CD8-positive, alpha-beta T cell (primary cell): ENCODE measurements at regions of chr20 and their contacts with region 1.

Region 1: GRCh38 chr20:24917797-24918578 is 31.1 kb upstream of the CST7 start:
- DNase-seq: peak; percentile 16 to 76 (median 49)
- ATAC-seq: peak; percentile 44
- H3K4me3 ChIP-seq: no peak overlapping the region
- H3K4me3 Mint-ChIP-seq: peak overlapping the region; percentile 5
- H3K27ac ChIP-seq: no peak overlapping the region
- H3K27ac Mint-ChIP-seq: no peak overlapping the region
- H3K4me1 ChIP-seq: no peaks in the 10 kb centered on the region
- H3K4me1 Mint-ChIP-seq: peaks cover 4% of the 10 kb centered on the region
- H3K27me3 ChIP-seq: no peaks in the 10 kb centered on the region
- H3K27me3 Mint-ChIP-seq: peaks cover 9% of the 10 kb centered on the region
- CTCF ChIP-seq: peak; percentile 75

Region 2: GRCh38 chr20:23889775-23890211 is 1028.2 kb before region 1 on chr20:
- CTCF ChIA-PET with region 1: no interaction called
- POLR2A ChIA-PET with region 1: no interaction called
- intact Hi-C with region 1: loop called (anchors 2 to 5 kb)
- DNase-seq: peak; percentile 37 to 82 (median 63)
- ATAC-seq: peak; percentile 88
- H3K4me3 ChIP-seq: no peak overlapping the region
- H3K4me3 Mint-ChIP-seq: no peak overlapping the region
- H3K27ac ChIP-seq: no peak overlapping the region
- H3K27ac Mint-ChIP-seq: no peak overlapping the region
- H3K4me1 ChIP-seq: peaks cover 9% of the 10 kb centered on the region
- H3K4me1 Mint-ChIP-seq: no peaks in the 10 kb centered on the region
- H3K27me3 ChIP-seq: no peaks in the 10 kb centered on the region
- H3K27me3 Mint-ChIP-seq: peaks cover 4% of the 10 kb centered on the region
- CTCF ChIP-seq: peak; percentile 61

Region 3: GRCh38 chr20:24100385-24101011 is 817.5 kb before region 1 on chr20:
- CTCF ChIA-PET with region 1: no interaction called
- POLR2A ChIA-PET with region 1: no interaction called
- intact Hi-C with region 1: loop called in 1 of 2 experiments (anchors 10 kb)
- DNase-seq: peak; percentile 16 to 78 (median 59)
- ATAC-seq: peak; percentile 93
- H3K4me3 ChIP-seq: no peak overlapping the region
- H3K4me3 Mint-ChIP-seq: no peak overlapping the region
- H3K27ac ChIP-seq: no peak overlapping the region
- H3K27ac Mint-ChIP-seq: no peak overlapping the region
- H3K4me1 ChIP-seq: peaks cover 4% of the 10 kb centered on the region
- H3K4me1 Mint-ChIP-seq: peaks cover 4% of the 10 kb centered on the region
- H3K27me3 ChIP-seq: no peaks in the 10 kb centered on the region
- H3K27me3 Mint-ChIP-seq: peaks cover 2% of the 10 kb centered on the region
- CTCF ChIP-seq: peak; percentile 75

Region 4: GRCh38 chr20:24134284-24134683 is 783.7 kb before region 1 on chr20:
- CTCF ChIA-PET with region 1: no interaction called
- POLR2A ChIA-PET with region 1: no interaction called
- intact Hi-C with region 1: loop called in 1 of 2 experiments (anchors 10 kb)
- DNase-seq: no peak
- ATAC-seq: no peak
- H3K4me3 ChIP-seq: no peak overlapping the region
- H3K4me3 Mint-ChIP-seq: no peak overlapping the region
- H3K27ac ChIP-seq: no peak overlapping the region
- H3K27ac Mint-ChIP-seq: no peak overlapping the region
- H3K4me1 ChIP-seq: no peaks in the 10 kb centered on the region
- H3K4me1 Mint-ChIP-seq: peaks cover 3% of the 10 kb centered on the region
- H3K27me3 ChIP-seq: no peaks in the 10 kb centered on the region
- H3K27me3 Mint-ChIP-seq: no peaks in the 10 kb centered on the region
- CTCF ChIP-seq: no peak

Region 5: DNA sequence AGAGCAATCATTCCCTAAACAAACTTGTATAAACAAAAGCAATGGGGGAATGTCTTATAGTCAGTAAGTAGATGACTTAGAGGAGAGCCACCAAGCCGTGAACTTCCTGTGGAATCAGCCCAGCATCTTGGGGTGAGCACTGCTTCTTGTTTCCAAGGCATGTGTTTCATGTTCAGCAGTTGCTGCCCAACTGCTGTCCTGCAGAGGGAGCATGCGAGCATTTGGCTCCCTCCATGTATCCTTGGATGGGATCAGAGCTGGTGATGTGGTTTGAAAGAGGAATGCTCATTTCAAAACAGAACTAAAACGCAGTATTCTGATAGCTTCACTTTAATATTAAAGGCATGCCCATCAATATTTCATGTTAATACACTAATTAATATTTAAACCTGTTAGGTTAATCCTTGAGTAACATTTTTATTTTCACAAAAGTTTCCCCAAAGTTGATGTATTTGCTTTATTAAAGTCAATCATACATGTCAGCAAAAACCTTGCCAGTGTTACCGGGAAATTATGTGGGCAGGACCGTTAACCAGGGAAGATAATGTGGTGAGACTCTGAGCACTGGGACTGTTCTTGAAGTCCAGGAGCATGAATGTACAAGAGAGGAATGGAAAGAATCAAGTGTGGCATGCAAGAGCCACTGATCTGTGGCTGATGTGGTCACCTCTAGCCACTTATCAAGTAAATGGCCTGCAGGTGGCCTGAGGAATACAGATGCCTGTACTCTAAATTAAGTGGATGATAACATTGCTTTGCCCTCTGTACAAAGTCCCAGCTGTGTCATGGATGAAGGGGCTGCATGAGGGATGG is 757.2 kb before region 1 on chr20:
- CTCF ChIA-PET with region 1: no interaction called
- POLR2A ChIA-PET with region 1: no interaction called
- intact Hi-C with region 1: loop called (anchors 10 kb)
- DNase-seq: peak in 2 of 9 experiments; percentile 20 to 46
- ATAC-seq: no peak
- H3K4me3 ChIP-seq: no peak overlapping the region
- H3K4me3 Mint-ChIP-seq: no peak overlapping the region
- H3K27ac ChIP-seq: no peak overlapping the region
- H3K27ac Mint-ChIP-seq: no peak overlapping the region
- H3K4me1 ChIP-seq: no peaks in the 10 kb centered on the region
- H3K4me1 Mint-ChIP-seq: peaks cover 2% of the 10 kb centered on the region
- H3K27me3 ChIP-seq: no peaks in the 10 kb centered on the region
- H3K27me3 Mint-ChIP-seq: peaks cover 2% of the 10 kb centered on the region
- CTCF ChIP-seq: peak; percentile 24

Region 6: GRCh38 chr20:24208614-24209013 is 709.4 kb before region 1 on chr20:
- CTCF ChIA-PET with region 1: no interaction called
- POLR2A ChIA-PET with region 1: no interaction called
- intact Hi-C with region 1: loop called in 1 of 2 experiments (anchors 10 kb)
- DNase-seq: no peak
- ATAC-seq: no peak
- H3K4me3 ChIP-seq: no peak overlapping the region
- H3K4me3 Mint-ChIP-seq: no peak overlapping the region
- H3K27ac ChIP-seq: no peak overlapping the region
- H3K27ac Mint-ChIP-seq: no peak overlapping the region
- H3K4me1 ChIP-seq: no peaks in the 10 kb centered on the region
- H3K4me1 Mint-ChIP-seq: peaks cover 4% of the 10 kb centered on the region
- H3K27me3 ChIP-seq: peaks cover 0 to 3% of the 10 kb centered on the region in 2 experiments
- H3K27me3 Mint-ChIP-seq: peaks cover 20% of the 10 kb centered on the region
- CTCF ChIP-seq: no peak

Region 7: GRCh38 chr20:24684956-24685691 is 232.9 kb before region 1 on chr20:
- CTCF ChIA-PET with region 1: no interaction called
- POLR2A ChIA-PET with region 1: no interaction called
- intact Hi-C with region 1: loop called in 1 of 2 experiments (anchors 10 kb)
- DNase-seq: no peak
- ATAC-seq: no peak
- H3K4me3 ChIP-seq: no peak overlapping the region
- H3K4me3 Mint-ChIP-seq: no peak overlapping the region
- H3K27ac ChIP-seq: no peak overlapping the region
- H3K27ac Mint-ChIP-seq: no peak overlapping the region
- H3K4me1 ChIP-seq: no peaks in the 10 kb centered on the region
- H3K4me1 Mint-ChIP-seq: no peaks in the 10 kb centered on the region
- H3K27me3 ChIP-seq: no peaks in the 10 kb centered on the region
- H3K27me3 Mint-ChIP-seq: no peaks in the 10 kb centered on the region
- CTCF ChIP-seq: no peak

Region 8: DNA sequence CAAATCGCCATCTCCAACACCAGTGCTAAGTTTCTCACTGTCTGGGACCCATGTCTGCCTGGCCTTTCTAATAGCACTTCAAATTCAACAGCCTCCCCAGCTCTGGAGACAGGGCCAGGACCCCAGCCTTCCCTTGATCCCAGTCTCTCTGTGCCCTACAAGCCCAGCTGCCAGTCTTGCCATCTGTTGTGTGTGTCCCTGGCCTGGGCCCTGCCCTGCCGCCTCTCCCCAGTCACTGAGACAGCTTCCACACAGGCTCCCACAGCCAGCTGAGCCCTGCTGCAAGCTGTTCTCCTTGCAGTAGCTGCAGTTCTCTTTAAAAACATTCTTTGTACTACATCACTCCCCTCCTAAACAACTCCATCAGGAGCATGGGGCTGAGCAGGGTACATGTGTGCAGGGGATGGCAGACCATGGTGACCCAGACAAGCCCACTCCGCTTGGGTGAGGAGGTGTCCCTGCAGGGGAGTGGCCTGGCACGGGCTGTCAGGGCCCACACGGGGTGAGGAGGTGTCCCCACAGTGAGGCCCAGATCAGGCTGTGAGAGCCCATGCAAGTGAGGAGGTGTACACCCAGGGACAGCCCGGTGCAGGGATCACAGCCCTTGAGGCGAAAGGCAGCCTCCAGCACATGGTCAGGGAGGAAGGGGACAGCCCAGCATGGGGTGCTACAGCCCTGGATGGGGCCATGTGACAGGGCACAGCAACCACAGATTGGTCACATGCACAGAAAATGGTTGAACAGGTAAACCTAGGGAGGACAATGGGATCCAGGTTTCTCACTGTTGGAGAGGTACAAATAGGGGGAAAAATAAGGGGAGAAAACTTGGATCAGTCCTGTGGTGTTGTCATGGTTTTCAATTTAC is 47.3 kb after region 1 on chr20:
- CTCF ChIA-PET with region 1: no interaction called
- POLR2A ChIA-PET with region 1: no interaction called
- intact Hi-C with region 1: no loop called
- DNase-seq: no peak
- ATAC-seq: no peak
- H3K4me3 ChIP-seq: no peak overlapping the region
- H3K4me3 Mint-ChIP-seq: no peak overlapping the region
- H3K27ac ChIP-seq: peak overlapping the region in 1 of 2 experiments; percentile 97
- H3K27ac Mint-ChIP-seq: peak overlapping the region; percentile 43
- H3K4me1 ChIP-seq: peaks cover 27% of the 10 kb centered on the region
- H3K4me1 Mint-ChIP-seq: peaks cover 42% of the 10 kb centered on the region
- H3K27me3 ChIP-seq: no peaks in the 10 kb centered on the region
- H3K27me3 Mint-ChIP-seq: no peaks in the 10 kb centered on the region
- CTCF ChIP-seq: no peak